Endothelial cell of umbilical vein (primary cell): ENCODE measurements at regions of chr4 and their contacts with region 1.

Region 1: DNA sequence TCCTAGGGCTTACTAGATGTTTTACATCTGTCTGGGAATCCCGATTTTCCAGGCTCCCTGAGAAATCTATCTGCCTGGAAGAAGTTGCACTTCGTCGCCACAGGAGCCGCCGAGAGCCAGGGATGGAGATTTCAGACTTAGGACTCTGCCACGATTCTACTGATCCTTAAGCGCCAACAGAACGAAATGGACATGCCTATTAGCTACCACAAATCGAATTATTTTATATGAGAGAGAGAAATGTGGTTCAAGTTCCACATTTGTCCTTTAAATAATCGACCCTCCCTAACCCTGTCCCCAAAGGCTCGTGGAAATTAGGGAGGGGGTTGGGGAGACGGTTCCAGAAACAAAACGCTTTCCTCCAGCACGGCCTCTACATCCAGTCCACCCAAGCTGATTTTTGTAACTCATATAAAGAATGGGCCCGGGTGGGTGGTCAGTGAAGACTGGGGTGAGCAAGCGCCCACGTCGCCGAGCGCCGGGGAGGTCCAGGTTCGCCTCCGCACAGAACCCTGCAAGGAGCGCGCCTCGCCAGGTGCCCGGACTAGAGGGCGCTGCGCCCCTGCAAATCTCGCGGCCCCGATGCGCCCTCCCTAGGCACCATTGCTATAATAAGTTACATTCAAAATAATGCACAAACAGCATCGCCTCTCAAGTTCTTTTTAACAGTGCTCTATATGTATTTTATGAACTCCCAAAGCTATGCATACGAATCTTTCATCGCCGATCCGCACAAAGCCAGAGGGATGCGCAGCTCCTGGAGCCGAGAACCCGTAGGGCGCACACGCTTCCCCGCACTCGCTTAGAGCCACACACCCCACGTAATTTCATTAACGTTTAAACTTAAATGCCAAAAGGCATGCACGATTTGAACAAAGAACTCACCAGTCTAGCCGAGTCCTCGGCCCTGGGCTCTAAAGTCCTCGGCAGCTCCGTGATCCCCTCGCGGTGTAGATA is 2.1 kb upstream of the FAT1 start:
- DNase-seq: peak; percentile 72
- H3K4me3 ChIP-seq: peak overlapping the region in 2 of 3 experiments; percentile 44 to 50
- H3K27ac ChIP-seq: no peak overlapping the region
- H3K4me1 ChIP-seq: peaks cover 32% of the 10 kb centered on the region
- H3K27me3 ChIP-seq: peaks cover 37 to 69% of the 10 kb centered on the region in 2 experiments
- CTCF ChIP-seq: peak; percentile 61 to 83
- POLR2A ChIP-seq: no peak

Region 2: DNA sequence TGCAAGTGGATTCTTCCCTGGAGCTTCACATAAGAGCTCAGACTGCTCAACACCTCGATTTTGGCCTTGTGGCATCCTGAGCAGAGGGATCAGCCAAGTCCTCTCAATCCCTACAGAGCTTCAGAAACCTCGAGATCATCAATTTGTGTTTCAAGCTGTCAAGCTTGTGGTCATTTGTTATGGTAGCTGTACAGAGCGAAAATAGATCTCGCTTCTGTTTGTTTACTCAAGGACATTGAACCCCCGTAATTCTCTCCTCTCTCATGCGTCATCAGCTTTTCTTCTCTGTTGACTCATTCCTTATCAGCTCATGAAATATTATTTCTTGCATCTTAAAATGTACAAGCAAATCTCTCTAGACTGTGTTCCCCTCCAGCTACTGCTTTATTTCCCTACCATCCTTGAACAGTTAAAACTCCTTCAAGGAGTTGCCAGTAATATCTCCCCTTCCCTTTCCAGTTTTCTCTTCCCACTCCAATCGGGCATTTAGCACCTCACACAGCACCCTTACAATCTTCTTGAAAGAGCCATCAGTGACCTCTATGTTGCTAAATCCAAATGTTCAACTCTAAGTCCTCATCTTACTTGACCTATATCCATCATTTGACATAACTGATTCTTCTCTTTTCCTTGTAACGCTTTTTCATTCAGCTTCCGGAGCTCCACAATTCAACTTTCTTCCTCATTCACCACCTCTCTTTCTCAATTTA is 104.1 kb after region 1 on chr4:
- CTCF ChIA-PET with region 1: no interaction called
- POLR2A ChIA-PET with region 1: no interaction called
- dilution Hi-C with region 1: no loop called
- intact Hi-C with region 1: loop called (anchors 1 kb)
- DNase-seq: peak; percentile 90
- H3K4me3 ChIP-seq: no peak overlapping the region
- H3K27ac ChIP-seq: peak overlapping the region; percentile 87
- H3K4me1 ChIP-seq: peaks cover 32% of the 10 kb centered on the region
- H3K27me3 ChIP-seq: no peaks in the 10 kb centered on the region
- CTCF ChIP-seq: no peak
- POLR2A ChIP-seq: no peak

Region 3: DNA sequence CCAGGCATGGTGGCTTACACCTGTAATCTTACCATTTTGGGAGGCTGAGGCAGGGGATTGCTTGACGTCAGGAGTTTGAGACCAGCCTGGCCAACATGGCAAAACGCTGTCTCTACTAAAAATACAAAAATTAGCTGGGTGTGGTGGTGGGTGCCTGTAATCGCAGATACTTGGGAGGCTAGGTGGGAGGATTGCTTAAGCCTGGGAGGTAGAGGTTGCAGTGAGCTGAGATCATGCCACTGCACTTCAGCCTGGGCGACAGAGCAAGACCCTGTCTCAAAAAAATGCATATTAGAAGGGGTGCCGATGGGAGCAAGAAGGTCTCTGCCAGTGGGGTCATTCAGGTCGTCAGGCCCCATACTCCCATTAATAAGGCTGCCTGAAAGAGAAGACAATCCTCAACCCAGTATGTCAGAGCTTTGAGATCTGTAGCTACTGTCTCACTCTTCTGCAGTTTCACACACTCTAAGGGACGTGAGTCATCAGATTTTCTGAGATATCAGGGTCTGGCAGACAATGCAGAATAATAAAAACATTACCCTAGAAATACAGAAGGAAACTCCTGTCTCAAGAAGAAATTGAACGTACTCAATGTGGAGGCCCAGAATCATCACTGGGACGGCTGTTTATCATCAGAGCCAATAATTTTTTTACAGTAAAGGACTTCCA is 174.6 kb after region 1 on chr4:
- CTCF ChIA-PET with region 1: interaction called, 3 read pairs
- POLR2A ChIA-PET with region 1: no interaction called
- dilution Hi-C with region 1: no loop called
- intact Hi-C with region 1: loop called (anchors 1 kb)
- DNase-seq: peak; percentile 91
- H3K4me3 ChIP-seq: no peak overlapping the region
- H3K27ac ChIP-seq: peak overlapping the region; percentile 96
- H3K4me1 ChIP-seq: peaks cover 18% of the 10 kb centered on the region
- H3K27me3 ChIP-seq: no peaks in the 10 kb centered on the region
- CTCF ChIP-seq: no peak
- POLR2A ChIP-seq: no peak

Region 4: DNA sequence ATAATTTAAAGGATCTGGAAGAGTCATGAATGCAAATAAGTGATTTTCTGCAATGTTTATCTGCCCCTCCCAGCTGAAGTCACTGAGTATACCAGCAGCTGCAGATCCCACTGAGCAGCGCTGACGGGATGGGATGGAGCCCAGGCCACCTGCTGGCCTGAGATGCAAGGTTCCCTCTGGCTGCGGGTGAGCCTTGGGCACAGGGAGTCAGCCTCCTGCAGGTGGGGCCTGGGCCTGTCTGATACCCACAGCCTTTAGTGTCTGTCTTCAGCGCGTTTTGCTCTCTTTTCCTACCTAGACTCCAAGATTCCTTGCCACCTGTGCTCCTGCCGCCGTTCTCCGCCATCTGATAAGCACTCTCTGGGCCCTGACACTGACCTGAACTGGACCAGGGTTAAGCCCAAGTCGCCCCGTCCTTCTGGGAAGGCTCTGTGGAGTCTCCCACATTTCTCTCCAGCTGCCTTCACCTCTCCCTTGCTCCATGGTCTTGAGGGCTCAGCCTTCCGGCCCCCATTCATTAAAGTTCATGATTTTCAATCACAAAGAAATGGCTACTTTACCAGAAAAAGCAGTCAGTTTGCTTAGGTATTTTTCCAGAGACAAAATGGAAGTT is 221.0 kb after region 1 on chr4:
- CTCF ChIA-PET with region 1: no interaction called
- POLR2A ChIA-PET with region 1: no interaction called
- dilution Hi-C with region 1: no loop called
- intact Hi-C with region 1: loop called (anchors 1 kb)
- DNase-seq: no peak
- H3K4me3 ChIP-seq: no peak overlapping the region
- H3K27ac ChIP-seq: no peak overlapping the region
- H3K4me1 ChIP-seq: no peaks in the 10 kb centered on the region
- H3K27me3 ChIP-seq: peaks cover 0 to 2% of the 10 kb centered on the region in 2 experiments
- CTCF ChIP-seq: peak in 1 of 2 donors; percentile 27
- POLR2A ChIP-seq: no peak

Region 5: DNA sequence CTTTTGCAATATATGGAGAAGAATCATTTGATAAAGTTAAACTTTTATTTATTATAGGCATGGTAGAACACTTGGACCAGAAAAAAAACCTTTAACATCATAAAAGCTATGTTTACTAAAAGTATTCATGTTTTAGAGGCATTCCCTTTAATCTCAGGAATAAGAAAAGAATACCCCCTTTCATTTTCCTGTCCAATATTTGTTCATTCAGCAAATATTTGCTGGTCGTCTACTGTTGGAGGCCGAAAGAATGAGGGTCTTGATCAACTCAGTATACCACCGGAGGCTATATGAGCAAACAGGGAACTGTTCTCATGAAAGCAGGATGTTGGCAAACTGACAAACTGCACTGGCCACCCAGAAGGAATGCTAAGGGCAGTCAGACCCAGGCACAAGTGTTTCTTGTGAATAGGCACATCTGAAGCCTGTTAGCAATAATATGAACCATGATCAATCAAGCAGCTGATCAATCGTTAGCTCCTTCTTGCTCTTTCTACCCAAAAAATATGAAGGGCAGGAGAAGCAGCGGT is 478.7 kb after region 1 on chr4:
- CTCF ChIA-PET with region 1: no interaction called
- POLR2A ChIA-PET with region 1: no interaction called
- dilution Hi-C with region 1: no loop called
- intact Hi-C with region 1: no loop called
- DNase-seq: no peak
- H3K4me3 ChIP-seq: no peak overlapping the region
- H3K27ac ChIP-seq: no peak overlapping the region
- H3K4me1 ChIP-seq: no peaks in the 10 kb centered on the region
- H3K27me3 ChIP-seq: no peaks in the 10 kb centered on the region
- CTCF ChIP-seq: no peak
- POLR2A ChIP-seq: no peak

Region 6: DNA sequence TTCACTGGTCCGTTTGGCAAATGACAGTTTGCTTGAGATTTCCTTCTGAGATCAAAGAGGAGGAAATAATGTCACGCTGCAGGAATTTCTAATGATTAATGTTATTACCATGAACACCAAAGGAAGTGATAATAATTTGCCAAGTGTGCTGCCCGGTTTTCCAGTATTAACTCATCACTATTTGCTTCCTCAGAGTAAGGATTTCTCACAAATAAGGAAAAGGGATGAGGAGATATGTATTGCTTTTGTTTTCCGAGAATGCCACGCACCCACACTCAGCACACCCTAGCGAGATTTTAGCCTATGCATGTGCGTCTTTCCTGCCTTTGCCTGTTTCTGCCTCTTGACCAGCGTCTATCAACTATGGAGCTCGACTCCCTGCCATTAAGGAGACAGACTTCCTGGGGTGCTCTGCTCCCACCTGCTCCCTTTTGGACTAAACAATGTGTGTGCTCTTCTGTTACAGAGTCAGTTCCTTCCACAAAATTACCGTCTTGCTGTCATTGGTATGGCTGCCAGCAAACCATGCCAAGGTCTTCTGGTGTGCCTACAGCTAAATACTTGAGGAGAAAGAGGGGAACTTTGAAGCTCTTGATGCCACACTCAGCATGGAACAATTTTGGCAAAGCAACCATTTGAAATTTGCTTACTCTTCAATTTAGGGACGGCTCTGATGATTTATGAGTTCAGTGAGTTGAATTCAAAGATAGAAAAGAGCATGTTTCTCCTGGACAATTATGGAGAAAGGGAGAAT is 876.8 kb after region 1 on chr4:
- CTCF ChIA-PET with region 1: no interaction called
- POLR2A ChIA-PET with region 1: no interaction called
- dilution Hi-C with region 1: no loop called
- intact Hi-C with region 1: loop called (anchors 1 kb)
- DNase-seq: peak; percentile 77
- H3K4me3 ChIP-seq: peak overlapping the region in 1 of 3 experiments; percentile 31
- H3K27ac ChIP-seq: peak overlapping the region; percentile 84
- H3K4me1 ChIP-seq: peaks cover 22% of the 10 kb centered on the region
- H3K27me3 ChIP-seq: no peaks in the 10 kb centered on the region
- CTCF ChIP-seq: no peak
- POLR2A ChIP-seq: no peak